A673 (cell line): ENCODE measurements at regions of chr13 and their contacts with region 1.

Region 1: DNA sequence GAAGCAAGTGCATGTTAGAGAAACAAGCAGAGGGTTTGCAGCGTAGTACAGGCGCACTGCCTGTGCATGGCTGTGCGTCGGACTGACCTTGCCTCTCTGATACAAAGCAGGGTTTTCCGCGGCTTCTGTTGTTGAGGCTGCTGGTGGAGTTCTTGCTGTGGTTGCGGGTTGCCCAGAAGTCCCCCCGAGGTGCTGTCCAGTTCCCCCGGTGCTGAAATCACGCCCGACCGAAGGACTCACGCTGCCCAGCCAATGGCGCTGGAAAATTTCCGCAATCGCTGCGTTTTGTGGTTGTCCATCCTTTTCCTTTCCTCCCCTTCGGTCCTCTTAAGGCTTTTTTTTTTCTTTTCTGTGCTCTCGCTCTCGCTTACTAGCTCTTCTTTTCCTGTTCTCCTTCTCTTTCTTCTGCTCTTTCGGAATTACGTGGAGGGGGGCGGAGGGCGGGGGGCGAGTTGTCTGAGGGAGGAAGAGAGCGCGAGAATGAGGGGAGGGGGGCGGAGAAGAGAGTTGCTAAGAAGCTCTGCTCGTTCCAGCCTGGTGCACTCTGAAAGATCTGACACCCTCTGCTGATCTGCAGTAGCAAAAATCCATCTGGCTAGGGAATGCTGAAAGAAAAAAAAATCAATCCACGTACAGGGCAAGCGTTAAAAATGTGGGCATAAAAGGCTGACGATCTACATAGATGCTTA is at the start of gene SLITRK1:
- DNase-seq: peak; percentile 82
- H3K4me3 ChIP-seq: peak within 1 kb of the TSS; percentile 41
- H3K27ac ChIP-seq: no peak within 1 kb of the TSS
- H3K4me1 ChIP-seq: peaks cover 7% of the 10 kb centered on the region
- H3K27me3 ChIP-seq: peaks cover 15% of the 10 kb centered on the region
- CTCF ChIP-seq: no peak
- total RNA-seq, gene SLITRK1: 0.49 and 0.57 TPM in 2 replicates

Region 2: DNA sequence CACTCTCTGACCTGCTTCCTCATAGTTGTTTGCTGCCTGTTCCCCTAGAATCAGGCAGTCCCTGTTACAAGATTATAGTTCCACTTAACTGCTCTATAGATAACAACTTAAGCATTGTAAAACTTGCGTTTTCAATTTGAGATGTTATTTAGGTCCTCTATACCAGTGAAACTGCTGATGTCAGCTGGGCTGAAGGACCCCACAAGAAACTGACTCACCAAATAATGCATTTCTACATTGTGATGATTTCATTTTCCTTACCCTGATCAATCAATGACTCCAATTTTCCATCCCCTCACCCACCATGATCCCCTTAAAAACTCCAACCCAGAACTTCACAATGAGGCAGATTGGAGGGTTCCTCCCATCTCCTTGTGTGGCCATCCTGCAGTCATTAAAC is 280.5 kb before region 1 on chr13:
- CTCF ChIA-PET with region 1: no interaction called
- POLR2A ChIA-PET with region 1: no interaction called
- intact Hi-C with region 1: loop called (anchors 10 kb)
- DNase-seq: no peak
- H3K4me3 ChIP-seq: no peak overlapping the region
- H3K27ac ChIP-seq: no peak overlapping the region
- H3K4me1 ChIP-seq: no peaks in the 10 kb centered on the region
- H3K27me3 ChIP-seq: no peaks in the 10 kb centered on the region
- CTCF ChIP-seq: no peak